ENCODE measurements at regions of chr6 and their contacts with region 1.

Region 1: GRCh38 chr6:150016324-150017185 is 8.8 kb downstream of the RAET1L start:
- DNase-seq: peak; percentile 66
- H3K4me3 Mint-ChIP-seq: no peak overlapping the region
- H3K27ac Mint-ChIP-seq: no peak overlapping the region
- H3K4me1 Mint-ChIP-seq: peaks cover 14% of the 10 kb centered on the region
- H3K27me3 Mint-ChIP-seq: peaks cover 70% of the 10 kb centered on the region

Region 2: GRCh38 chr6:149834513-149835481 is 181.8 kb before region 1 on chr6:
- CTCF ChIA-PET with region 1: no interaction called
- intact Hi-C with region 1: loop called (anchors 1 kb)
- DNase-seq: peak; percentile 87
- H3K4me3 Mint-ChIP-seq: no peak overlapping the region
- H3K27ac Mint-ChIP-seq: no peak overlapping the region
- H3K4me1 Mint-ChIP-seq: peaks cover 2% of the 10 kb centered on the region
- H3K27me3 Mint-ChIP-seq: no peaks in the 10 kb centered on the region

Region 3: DNA sequence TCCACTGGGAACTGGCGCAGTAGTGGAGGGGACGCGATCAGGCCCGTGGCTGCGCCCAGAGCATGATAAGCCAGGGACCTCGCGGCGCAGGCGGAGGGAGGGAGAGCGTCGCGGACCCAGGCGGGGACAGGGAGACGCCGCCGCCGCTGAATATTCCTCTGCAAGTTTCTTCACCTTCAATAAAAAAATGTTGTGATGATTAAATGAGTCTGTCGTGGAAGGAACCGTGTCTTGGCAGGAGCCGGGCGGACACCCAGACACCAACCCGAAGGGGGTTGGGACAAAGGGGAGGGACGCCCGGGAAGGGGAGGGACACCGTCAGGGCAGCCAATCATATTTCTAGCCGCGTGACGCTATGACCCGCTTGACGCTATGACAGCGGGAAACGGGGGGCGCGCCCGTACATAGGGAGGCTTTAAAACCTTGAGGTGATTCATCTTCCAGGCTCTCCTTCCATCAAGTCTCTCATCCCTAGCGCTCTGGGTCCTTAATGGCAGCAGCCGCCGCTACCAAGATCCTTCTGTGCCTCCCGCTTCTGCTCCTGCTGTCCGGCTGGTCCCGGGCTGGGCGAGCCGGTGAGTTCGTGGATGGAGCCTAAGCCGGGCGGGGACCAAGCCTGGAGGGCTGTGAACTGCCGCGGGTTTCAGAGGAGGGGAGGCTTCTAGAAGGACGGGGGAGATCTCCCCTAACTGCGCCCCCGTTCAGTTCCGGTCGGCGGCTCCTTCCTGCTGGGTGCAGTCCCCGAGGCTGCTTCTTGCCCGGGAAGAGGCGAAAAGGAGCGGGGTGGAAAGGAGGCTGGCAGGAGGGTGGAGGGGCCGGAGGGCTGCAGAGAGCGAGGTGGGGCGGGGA is 74.7 kb before region 1 on chr6 and contains the start of gene ULBP2:
- CTCF ChIA-PET with region 1: no interaction called
- intact Hi-C with region 1: loop called (anchors 1 kb)
- DNase-seq: peak; percentile 96
- H3K4me3 Mint-ChIP-seq: peak within 1 kb of the TSS; percentile 89
- H3K27ac Mint-ChIP-seq: no peak within 1 kb of the TSS
- H3K4me1 Mint-ChIP-seq: peaks cover 32% of the 10 kb centered on the region
- H3K27me3 Mint-ChIP-seq: peaks cover 46% of the 10 kb centered on the region
- total RNA-seq, gene ULBP2: 0.69 to 1.4 TPM

Region 4: DNA sequence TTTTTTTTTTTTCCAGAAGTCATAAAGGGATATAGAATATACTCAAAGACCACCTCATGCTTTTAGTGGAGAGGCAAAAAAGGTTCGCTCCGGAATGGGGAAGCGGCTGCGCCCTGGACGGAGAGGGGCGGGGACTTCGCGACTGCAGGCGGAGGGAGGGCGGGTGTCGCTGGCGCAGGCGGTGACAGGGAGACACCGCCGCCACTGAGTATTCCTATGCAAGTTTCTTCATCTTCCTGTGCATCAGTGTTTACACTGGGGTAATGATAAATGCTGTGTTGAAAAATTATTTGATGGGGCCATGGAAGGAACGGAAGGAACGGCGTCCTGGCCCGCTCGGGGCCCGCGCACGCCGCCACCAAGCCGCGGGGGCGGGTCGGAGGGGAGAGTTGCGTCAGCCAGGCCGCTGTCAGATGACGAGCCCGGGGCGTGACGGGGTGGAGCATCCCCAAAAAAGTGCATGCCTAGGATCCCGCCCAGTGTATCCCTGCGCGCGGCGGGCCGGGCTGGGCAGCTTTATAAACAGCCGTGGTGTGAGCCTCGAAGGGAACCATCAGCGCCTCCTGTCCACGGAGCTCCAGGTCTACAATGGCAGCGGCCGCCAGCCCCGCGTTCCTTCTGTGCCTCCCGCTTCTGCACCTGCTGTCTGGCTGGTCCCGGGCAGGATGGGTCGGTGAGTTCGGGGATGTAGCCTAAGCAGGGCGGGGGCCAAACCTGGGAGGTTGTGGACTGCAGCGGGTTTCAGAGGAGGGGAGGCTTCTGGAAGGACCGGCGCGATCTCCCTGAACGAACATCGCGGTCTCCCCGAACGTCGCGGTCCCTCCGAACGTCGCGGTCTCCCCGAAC is 52.9 kb before region 1 on chr6 and contains the start of gene ULBP1:
- CTCF ChIA-PET with region 1: interaction called, 4 read pairs
- intact Hi-C with region 1: loop called (anchors 2 kb)
- DNase-seq: peak; percentile 93
- H3K4me3 Mint-ChIP-seq: peak within 1 kb of the TSS; percentile 90
- H3K27ac Mint-ChIP-seq: peak within 1 kb of the TSS; percentile 78
- H3K4me1 Mint-ChIP-seq: peaks cover 19% of the 10 kb centered on the region
- H3K27me3 Mint-ChIP-seq: peaks cover 63% of the 10 kb centered on the region
- total RNA-seq, gene ULBP1: 2.6 to 2.8 TPM

Region 5: DNA sequence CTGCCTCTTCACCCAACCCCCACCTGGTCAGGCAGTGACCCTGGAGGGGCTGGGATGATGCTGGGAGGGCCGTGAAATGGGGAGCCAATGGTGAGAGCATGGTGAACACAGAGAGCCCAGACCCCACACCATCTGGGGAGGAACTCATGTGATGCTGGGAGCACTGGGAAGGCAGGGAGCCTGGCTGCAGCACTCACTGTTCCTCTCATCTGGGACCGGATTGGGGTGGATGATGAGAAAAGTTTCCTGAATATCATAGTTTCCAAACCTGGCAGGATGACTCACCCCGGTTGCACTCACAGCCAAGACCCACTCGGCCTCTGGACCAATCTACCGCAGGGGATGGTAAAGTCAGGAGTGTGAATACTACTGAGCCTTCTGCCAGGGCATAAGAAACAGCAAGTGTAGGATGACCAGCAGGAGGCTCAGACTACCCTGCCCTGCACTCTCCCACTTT is 31.0 kb before region 1 on chr6:
- CTCF ChIA-PET with region 1: no interaction called
- intact Hi-C with region 1: no loop called
- DNase-seq: no peak
- H3K4me3 Mint-ChIP-seq: no peak overlapping the region
- H3K27ac Mint-ChIP-seq: no peak overlapping the region
- H3K4me1 Mint-ChIP-seq: peaks cover 15% of the 10 kb centered on the region
- H3K27me3 Mint-ChIP-seq: peaks cover 72% of the 10 kb centered on the region

Measured in activated naive CD4-positive, alpha-beta T cell treated with anti-CD3 and anti-CD28 coated beads for 36 hours (primary cell).